Right ventricle myocardium inferior (tissue), 1 donor: ENCODE measurements at regions of chr14 and their contacts with region 1.

Region 1: DNA sequence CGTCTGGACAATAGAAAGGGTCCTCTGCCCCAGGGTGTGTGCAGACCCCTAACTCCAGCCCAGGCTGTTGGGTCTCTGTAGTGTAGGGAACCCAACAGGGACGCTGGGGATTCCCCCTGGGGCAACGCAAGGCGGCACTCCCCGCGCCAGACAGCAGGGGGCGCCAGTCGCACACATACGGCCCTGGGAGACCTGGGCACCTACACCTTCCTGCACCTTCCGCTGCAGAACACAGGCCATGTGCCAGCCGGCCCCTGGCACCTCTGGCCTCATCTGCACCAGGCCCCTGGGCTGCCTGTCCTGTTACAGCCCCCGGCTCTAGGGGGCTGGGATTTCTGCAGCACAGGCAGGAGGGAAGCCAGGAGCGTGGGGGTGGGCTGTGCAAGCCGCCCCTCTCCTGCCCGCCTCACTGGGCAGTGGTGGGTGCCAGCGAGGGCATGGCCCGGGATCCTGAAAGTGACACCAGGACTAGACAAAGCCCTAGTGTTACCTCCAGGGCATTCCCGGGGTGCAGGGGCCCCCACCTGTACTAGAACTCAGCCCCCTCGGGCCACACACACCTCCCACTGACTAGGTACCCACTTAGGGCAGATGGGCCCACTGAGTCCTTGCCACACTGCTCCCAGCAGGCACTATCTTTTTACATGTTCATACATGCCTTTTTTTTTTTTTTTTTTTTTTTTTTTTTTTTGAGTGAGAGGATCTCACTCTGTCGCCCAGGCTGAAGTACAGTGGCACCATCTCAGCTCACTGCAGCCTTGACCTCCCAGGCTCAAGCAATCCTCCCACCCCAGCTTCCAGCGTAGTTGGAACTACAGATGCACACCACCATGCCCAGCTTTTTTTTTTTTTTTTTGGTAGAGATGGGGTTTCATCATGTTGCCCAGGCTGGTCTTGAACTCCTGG is 37.5 kb downstream of the CCNK start:
- DNase-seq: peak; percentile 90
- ATAC-seq: peak; percentile 61

Region 2: DNA sequence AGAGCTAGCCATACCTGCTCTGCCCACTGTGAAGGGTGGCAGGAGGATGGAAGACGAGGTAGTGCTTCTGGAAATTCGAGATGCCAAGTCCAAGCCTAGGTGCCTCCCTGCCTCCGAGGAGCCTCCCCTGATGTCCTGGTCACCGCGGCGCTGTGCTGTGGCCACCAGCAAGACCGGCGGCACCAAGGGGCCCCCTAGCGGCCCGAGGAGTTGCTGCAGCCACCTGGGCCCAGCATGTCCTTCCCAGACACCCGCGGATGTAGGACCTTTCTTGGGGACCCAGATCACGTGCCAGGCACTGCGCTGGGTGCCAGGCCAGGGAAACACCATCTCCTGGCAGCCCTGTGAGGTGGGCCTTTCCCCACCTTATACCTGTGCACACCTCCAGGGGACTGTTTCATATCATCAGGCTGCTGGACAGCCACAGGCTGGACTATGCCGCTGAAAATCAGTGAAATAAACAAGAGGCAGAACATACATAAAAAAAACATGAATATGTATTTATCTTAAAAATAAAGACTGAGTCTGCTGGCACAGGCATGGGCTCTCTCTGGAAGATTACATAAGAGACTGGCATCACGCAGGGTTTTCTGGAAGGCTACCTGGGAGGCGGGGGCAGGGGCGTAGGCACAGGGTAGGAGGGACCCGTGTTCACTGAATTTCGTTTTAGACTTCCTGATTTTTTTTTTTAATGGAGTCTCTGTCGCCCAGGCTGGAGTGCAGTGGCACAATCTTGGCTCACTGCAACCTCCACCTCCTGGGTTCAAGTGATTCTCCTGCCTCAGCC is 110.3 kb after region 1 on chr14:
- intact Hi-C with region 1: loop called (anchors 1 kb)
- DNase-seq: peak; percentile 88
- ATAC-seq: peak; percentile 89